B cell (primary cell): ENCODE measurements at regions of chr3 and their contacts with region 1.

Region 1: GRCh38 chr3:151468284-151468917 is 7.5 kb upstream of the IGSF10 start:
- DNase-seq: peak; percentile 62
- ATAC-seq: peak; percentile 58
- H3K4me3 ChIP-seq: no peak overlapping the region
- H3K4me3 Mint-ChIP-seq: no peak overlapping the region
- H3K27ac ChIP-seq: no peak overlapping the region
- H3K27ac Mint-ChIP-seq: no peak overlapping the region
- H3K4me1 ChIP-seq: peaks cover 0 to 6% of the 10 kb centered on the region in 2 donors
- H3K4me1 Mint-ChIP-seq: peaks cover 9% of the 10 kb centered on the region
- H3K27me3 ChIP-seq: no peaks in the 10 kb centered on the region
- H3K27me3 Mint-ChIP-seq: peaks cover 5% of the 10 kb centered on the region
- CTCF ChIP-seq: peak; percentile 89

Region 2: DNA sequence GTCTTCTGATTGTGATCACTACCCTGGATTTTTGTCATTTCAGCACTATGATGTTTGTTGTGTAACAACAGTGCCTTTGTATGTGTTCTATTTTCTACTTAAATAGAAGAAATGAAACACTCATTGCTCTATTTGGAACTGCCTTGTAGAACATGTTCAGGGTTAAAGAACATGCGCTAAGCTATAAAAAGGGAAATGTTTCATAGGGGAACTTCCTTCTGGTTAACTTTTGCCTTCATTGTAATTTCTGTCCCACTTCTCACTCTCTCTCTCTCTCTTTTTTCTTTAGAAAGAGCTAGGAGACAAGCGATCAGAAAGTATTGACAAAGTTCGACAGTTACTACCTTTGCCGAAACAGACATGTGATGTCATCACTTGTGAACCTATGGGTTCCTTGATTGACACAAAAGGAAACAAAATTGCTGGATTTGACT is 83.6 kb before region 1 on chr3 and contains the start of gene P2RY12:
- CTCF ChIA-PET with region 1: interaction called, 10 read pairs
- POLR2A ChIA-PET with region 1: no interaction called
- intact Hi-C with region 1: loop called (anchors 2 kb)
- DNase-seq: peak; percentile 62
- ATAC-seq: peak; percentile 24
- H3K4me3 ChIP-seq: peak within 1 kb of the TSS in 4 of 5 experiments; percentile 18 to 53 (median 35)
- H3K4me3 Mint-ChIP-seq: peak within 1 kb of the TSS; percentile 81
- H3K27ac ChIP-seq: peak within 1 kb of the TSS; percentile 59 to 87
- H3K27ac Mint-ChIP-seq: peak within 1 kb of the TSS; percentile 85
- H3K4me1 ChIP-seq: peaks cover 55 to 63% of the 10 kb centered on the region in 2 donors
- H3K4me1 Mint-ChIP-seq: peaks cover 64% of the 10 kb centered on the region
- H3K27me3 ChIP-seq: no peaks in the 10 kb centered on the region
- H3K27me3 Mint-ChIP-seq: no peaks in the 10 kb centered on the region
- CTCF ChIP-seq: no peak
- total RNA-seq, gene P2RY12: 0.73 and 0.79 TPM in 2 replicates

Region 3: GRCh38 chr3:151439652-151440129 is 28.7 kb before region 1 on chr3:
- CTCF ChIA-PET with region 1: interaction called, 13 read pairs
- POLR2A ChIA-PET with region 1: no interaction called
- intact Hi-C with region 1: no loop called
- DNase-seq: peak; percentile 61
- ATAC-seq: peak; percentile 80
- H3K4me3 ChIP-seq: no peak overlapping the region
- H3K4me3 Mint-ChIP-seq: no peak overlapping the region
- H3K27ac ChIP-seq: no peak overlapping the region
- H3K27ac Mint-ChIP-seq: no peak overlapping the region
- H3K4me1 ChIP-seq: no peaks in the 10 kb centered on the region
- H3K4me1 Mint-ChIP-seq: peaks cover 2% of the 10 kb centered on the region
- H3K27me3 ChIP-seq: no peaks in the 10 kb centered on the region
- H3K27me3 Mint-ChIP-seq: no peaks in the 10 kb centered on the region
- CTCF ChIP-seq: peak; percentile 87

Region 4: GRCh38 chr3:151456065-151456464 is 12.3 kb before region 1 on chr3:
- CTCF ChIA-PET with region 1: interaction called, 16 read pairs
- POLR2A ChIA-PET with region 1: no interaction called
- intact Hi-C with region 1: no loop called
- DNase-seq: no peak
- ATAC-seq: no peak
- H3K4me3 ChIP-seq: no peak overlapping the region
- H3K4me3 Mint-ChIP-seq: no peak overlapping the region
- H3K27ac ChIP-seq: no peak overlapping the region
- H3K27ac Mint-ChIP-seq: no peak overlapping the region
- H3K4me1 ChIP-seq: peaks cover 6 to 8% of the 10 kb centered on the region in 2 donors
- H3K4me1 Mint-ChIP-seq: peaks cover 3% of the 10 kb centered on the region
- H3K27me3 ChIP-seq: peaks cover 0 to 7% (median 3%) of the 10 kb centered on the region in 4 experiments
- H3K27me3 Mint-ChIP-seq: peaks cover 10% of the 10 kb centered on the region
- CTCF ChIP-seq: no peak

Region 5: GRCh38 chr3:152039887-152040286 is 571.5 kb after region 1 on chr3:
- CTCF ChIA-PET with region 1: no interaction called
- POLR2A ChIA-PET with region 1: no interaction called
- intact Hi-C with region 1: no loop called
- DNase-seq: no peak
- ATAC-seq: no peak
- H3K4me3 ChIP-seq: no peak overlapping the region
- H3K4me3 Mint-ChIP-seq: no peak overlapping the region
- H3K27ac ChIP-seq: no peak overlapping the region
- H3K27ac Mint-ChIP-seq: no peak overlapping the region
- H3K4me1 ChIP-seq: no peaks in the 10 kb centered on the region
- H3K4me1 Mint-ChIP-seq: peaks cover 5% of the 10 kb centered on the region
- H3K27me3 ChIP-seq: no peaks in the 10 kb centered on the region
- H3K27me3 Mint-ChIP-seq: no peaks in the 10 kb centered on the region
- CTCF ChIP-seq: no peak